CD8-positive, alpha-beta T cell (primary cell): ENCODE measurements at regions of chr1 and their contacts with region 1.

Region 1: DNA sequence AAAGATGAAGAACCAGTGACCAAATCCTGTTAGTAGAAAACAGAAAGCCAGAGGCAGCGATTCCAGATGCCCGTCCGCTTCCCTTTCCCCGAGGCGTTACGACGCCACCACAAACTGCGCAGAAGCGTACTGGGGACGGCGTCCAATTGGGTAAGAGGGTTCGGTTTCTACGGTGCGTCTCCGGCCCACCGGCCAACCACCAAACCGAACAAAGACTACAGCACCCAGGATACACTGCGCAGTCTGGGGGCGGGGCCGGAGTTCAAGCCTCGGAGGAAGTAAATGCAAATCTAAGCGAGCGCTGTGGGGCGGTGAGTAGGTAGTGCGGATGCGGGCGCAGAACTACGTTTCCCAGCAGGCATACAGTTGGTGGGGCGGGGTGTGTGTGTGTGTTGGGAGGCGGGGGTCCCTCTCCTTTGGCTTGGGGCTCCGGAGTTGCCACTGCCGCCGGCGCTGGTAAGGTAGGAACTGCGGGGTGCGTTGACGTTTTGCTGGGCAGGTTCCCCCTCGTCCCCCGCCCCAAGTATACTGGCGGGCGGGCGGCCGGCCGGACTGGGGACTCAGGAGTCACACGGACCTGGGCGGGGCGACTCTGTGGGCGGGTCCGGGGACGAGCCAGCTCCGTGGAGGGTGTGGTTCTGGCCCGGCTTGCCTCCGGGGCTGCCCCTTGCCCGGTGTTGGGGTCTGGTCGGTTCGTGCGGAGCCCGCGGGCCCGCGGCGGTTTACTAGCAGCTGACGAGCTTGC is at the starts of genes SWT1 and TRMT1L:
- DNase-seq: peak; percentile 96 to 99 (median 98)
- ATAC-seq: peak; percentile 89
- H3K4me3 ChIP-seq: peak within 1 kb of the TSS; percentile 75 to 97
- H3K4me3 Mint-ChIP-seq: peak within 1 kb of the TSS; percentile 99
- H3K27ac ChIP-seq: peak within 1 kb of the TSS; percentile 86 to 98
- H3K27ac Mint-ChIP-seq: peak within 1 kb of the TSS; percentile 99
- H3K4me1 ChIP-seq: peaks cover 17% of the 10 kb centered on the region
- H3K4me1 Mint-ChIP-seq: peaks cover 49% of the 10 kb centered on the region
- H3K27me3 ChIP-seq: no peaks in the 10 kb centered on the region
- H3K27me3 Mint-ChIP-seq: no peaks in the 10 kb centered on the region
- CTCF ChIP-seq: no peak
- total RNA-seq, gene SWT1: 3.0 to 3.9 TPM
- total RNA-seq, gene TRMT1L: 3.0 to 5.1 TPM

Region 2: GRCh38 chr1:184051485-184052193 is 1105.4 kb before region 1 on chr1 and contains the start of gene TSEN15:
- CTCF ChIA-PET with region 1: no interaction called
- POLR2A ChIA-PET with region 1: no interaction called
- intact Hi-C with region 1: loop called in 1 of 2 experiments (anchors 10 kb)
- DNase-seq: peak; percentile 49 to 89 (median 76)
- ATAC-seq: peak; percentile 95
- H3K4me3 ChIP-seq: peak within 1 kb of the TSS; percentile 86 to 94
- H3K4me3 Mint-ChIP-seq: peak within 1 kb of the TSS; percentile 98
- H3K27ac ChIP-seq: peak within 1 kb of the TSS; percentile 66 to 78
- H3K27ac Mint-ChIP-seq: peak within 1 kb of the TSS; percentile 98
- H3K4me1 ChIP-seq: peaks cover 21% of the 10 kb centered on the region
- H3K4me1 Mint-ChIP-seq: peaks cover 47% of the 10 kb centered on the region
- H3K27me3 ChIP-seq: no peaks in the 10 kb centered on the region
- H3K27me3 Mint-ChIP-seq: peaks cover 14% of the 10 kb centered on the region
- CTCF ChIP-seq: no peak
- total RNA-seq, gene TSEN15: 14.8 to 15.9 TPM

Region 3: DNA sequence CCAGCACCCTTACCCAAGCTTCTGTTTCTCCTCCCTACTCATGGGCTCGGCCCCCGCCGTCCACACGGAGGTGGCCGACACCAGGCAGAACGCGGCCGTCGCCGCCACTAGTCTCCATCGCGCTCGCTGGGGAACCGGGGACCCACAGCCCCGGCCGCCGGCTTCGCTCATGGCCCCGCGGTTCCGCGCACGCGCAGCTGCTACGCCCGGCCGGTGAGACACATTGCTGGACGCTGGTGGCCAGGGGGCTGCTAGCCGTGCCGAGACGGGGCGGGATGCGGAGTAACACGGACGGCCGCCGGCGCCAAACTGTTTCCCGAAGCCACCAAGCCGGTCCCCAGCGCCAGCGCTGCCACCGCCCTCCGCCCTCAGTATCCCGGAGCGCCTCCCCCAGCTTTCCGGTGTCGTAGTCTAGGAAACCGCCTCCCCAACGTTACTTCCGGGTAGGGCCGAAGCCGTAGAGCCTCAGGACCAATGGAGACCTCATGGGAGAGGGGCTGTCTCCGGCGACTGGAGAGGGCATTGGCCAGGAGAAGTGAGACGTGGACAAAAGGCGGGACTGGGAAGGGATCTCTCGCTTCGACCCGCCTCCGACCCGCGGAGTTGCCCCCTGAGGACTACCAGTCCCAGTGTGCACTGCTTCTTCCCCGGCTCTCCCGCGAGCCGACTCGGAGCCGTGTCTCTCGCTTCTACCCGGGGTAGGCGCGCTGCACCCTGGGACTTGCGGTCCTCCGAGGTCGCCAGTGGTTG is 402.4 kb before region 1 on chr1 and contains the start of gene EDEM3:
- CTCF ChIA-PET with region 1: no interaction called
- POLR2A ChIA-PET with region 1: interaction called, 6 read pairs
- intact Hi-C with region 1: loop called (anchors 1 kb)
- DNase-seq: peak; percentile 94 to 100 (median 97)
- ATAC-seq: peak; percentile 92
- H3K4me3 ChIP-seq: peak within 1 kb of the TSS; percentile 80 to 91
- H3K4me3 Mint-ChIP-seq: peak within 1 kb of the TSS; percentile 93
- H3K27ac ChIP-seq: peak within 1 kb of the TSS; percentile 80 to 84
- H3K27ac Mint-ChIP-seq: peak within 1 kb of the TSS; percentile 97
- H3K4me1 ChIP-seq: peaks cover 22% of the 10 kb centered on the region
- H3K4me1 Mint-ChIP-seq: peaks cover 50% of the 10 kb centered on the region
- H3K27me3 ChIP-seq: no peaks in the 10 kb centered on the region
- H3K27me3 Mint-ChIP-seq: no peaks in the 10 kb centered on the region
- CTCF ChIP-seq: no peak
- total RNA-seq, gene EDEM3: 9.3 to 14.8 TPM

Region 4: GRCh38 chr1:185044981-185045813 is 111.8 kb before region 1 on chr1 and contains the start of gene RNF2:
- CTCF ChIA-PET with region 1: no interaction called
- POLR2A ChIA-PET with region 1: interaction called, 6 read pairs
- intact Hi-C with region 1: loop called (anchors 1 to 2 kb)
- DNase-seq: peak; percentile 61 to 95 (median 84)
- ATAC-seq: peak; percentile 91
- H3K4me3 ChIP-seq: peak within 1 kb of the TSS; percentile 74 to 85
- H3K4me3 Mint-ChIP-seq: peak within 1 kb of the TSS; percentile 92
- H3K27ac ChIP-seq: peak within 1 kb of the TSS; percentile 62 to 81
- H3K27ac Mint-ChIP-seq: peak within 1 kb of the TSS; percentile 93
- H3K4me1 ChIP-seq: peaks cover 23% of the 10 kb centered on the region
- H3K4me1 Mint-ChIP-seq: peaks cover 46% of the 10 kb centered on the region
- H3K27me3 ChIP-seq: no peaks in the 10 kb centered on the region
- H3K27me3 Mint-ChIP-seq: no peaks in the 10 kb centered on the region
- CTCF ChIP-seq: no peak
- total RNA-seq, gene RNF2: 13.3 to 13.6 TPM

Region 5: GRCh38 chr1:185566995-185567394 is 410.0 kb after region 1 on chr1:
- CTCF ChIA-PET with region 1: no interaction called
- POLR2A ChIA-PET with region 1: no interaction called
- intact Hi-C with region 1: loop called in 1 of 2 experiments (anchors 2 kb)
- DNase-seq: peak in 7 of 9 experiments; percentile 27 to 95 (median 60)
- ATAC-seq: peak; percentile 78
- H3K4me3 ChIP-seq: peak overlapping the region in 1 of 2 experiments; percentile 9
- H3K4me3 Mint-ChIP-seq: peak overlapping the region; percentile 74
- H3K27ac ChIP-seq: peak overlapping the region; percentile 79 to 93
- H3K27ac Mint-ChIP-seq: peak overlapping the region; percentile 97
- H3K4me1 ChIP-seq: peaks cover 46% of the 10 kb centered on the region
- H3K4me1 Mint-ChIP-seq: peaks cover 82% of the 10 kb centered on the region
- H3K27me3 ChIP-seq: no peaks in the 10 kb centered on the region
- H3K27me3 Mint-ChIP-seq: no peaks in the 10 kb centered on the region
- CTCF ChIP-seq: no peak

Region 6: GRCh38 chr1:185632659-185633423 is 475.8 kb after region 1 on chr1:
- CTCF ChIA-PET with region 1: no interaction called
- POLR2A ChIA-PET with region 1: no interaction called
- intact Hi-C with region 1: no loop called
- DNase-seq: no peak
- ATAC-seq: no peak
- H3K4me3 ChIP-seq: no peak overlapping the region
- H3K4me3 Mint-ChIP-seq: no peak overlapping the region
- H3K27ac ChIP-seq: no peak overlapping the region
- H3K27ac Mint-ChIP-seq: no peak overlapping the region
- H3K4me1 ChIP-seq: no peaks in the 10 kb centered on the region
- H3K4me1 Mint-ChIP-seq: no peaks in the 10 kb centered on the region
- H3K27me3 ChIP-seq: no peaks in the 10 kb centered on the region
- H3K27me3 Mint-ChIP-seq: no peaks in the 10 kb centered on the region
- CTCF ChIP-seq: no peak